H1 (cell line): ENCODE measurements at regions of chr5 and their contacts with region 1.

Region 1: DNA sequence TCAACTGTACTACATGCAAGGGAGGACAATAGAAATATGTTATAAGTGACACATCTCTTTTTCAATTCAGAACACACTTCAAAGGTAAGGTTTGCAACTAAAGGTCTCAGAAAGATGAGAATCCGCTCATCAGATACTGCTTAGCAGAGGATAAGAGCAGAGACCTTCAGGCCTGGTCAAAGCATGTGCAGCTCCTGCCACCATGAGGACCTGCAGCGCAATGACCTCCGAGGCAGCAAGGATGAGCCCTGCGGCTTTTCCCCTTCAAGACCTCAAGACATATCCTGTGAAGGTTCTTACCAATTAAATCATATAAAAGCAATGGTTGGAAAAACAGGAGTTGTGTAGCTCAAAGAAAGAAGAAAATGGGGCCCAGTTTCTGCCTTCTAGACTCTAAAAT is 135.8 kb downstream of the TRIM36 start:
- DNase-seq: peak; percentile 39 to 56
- H3K4me3 ChIP-seq: no peak overlapping the region
- H3K27ac ChIP-seq: no peak overlapping the region
- H3K4me1 ChIP-seq: no peaks in the 10 kb centered on the region; a peak in 1 of 7 replicates
- H3K27me3 ChIP-seq: no peaks in the 10 kb centered on the region
- CTCF ChIP-seq: peak; percentile 73 to 83 (median 80)
- EP300 ChIP-seq: no peak
- POLR2A ChIP-seq: no peak
- RAD21 ChIP-seq: peak; percentile 94 to 95

Region 2: GRCh38 chr5:114658194-114658593 is 375.7 kb before region 1 on chr5:
- CTCF ChIA-PET with region 1: no interaction called
- POLR2A ChIA-PET with region 1: no interaction called
- DNase-seq: no peak
- H3K4me3 ChIP-seq: no peak overlapping the region
- H3K27ac ChIP-seq: no peak overlapping the region
- H3K4me1 ChIP-seq: peaks cover 0 to 3% (median 0%) of the 10 kb centered on the region in 4 experiments; a peak in 1 of 7 replicates
- H3K27me3 ChIP-seq: no peaks in the 10 kb centered on the region
- CTCF ChIP-seq: no peak
- EP300 ChIP-seq: no peak
- POLR2A ChIP-seq: no peak
- RAD21 ChIP-seq: no peak

Region 3: DNA sequence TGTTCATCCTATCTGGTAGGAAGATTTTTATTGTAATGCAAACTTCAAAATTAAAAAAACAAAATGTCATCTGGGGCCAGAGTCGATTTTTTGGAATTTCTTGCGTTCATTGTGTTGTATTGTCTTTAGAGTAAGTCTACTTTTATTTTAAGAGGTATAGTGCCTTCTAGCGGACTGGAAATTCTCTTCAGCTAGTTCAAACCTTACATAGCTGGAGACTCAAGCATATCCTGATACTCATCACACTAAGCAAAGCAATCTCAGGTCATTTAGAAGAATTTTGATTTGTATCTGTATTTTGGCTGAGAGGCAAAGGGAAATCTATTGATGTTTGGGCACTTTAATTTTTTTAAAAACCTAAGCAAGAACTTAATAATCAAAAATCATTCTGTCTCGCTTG is 230.5 kb before region 1 on chr5:
- CTCF ChIA-PET with region 1: interaction called, 15 read pairs
- POLR2A ChIA-PET with region 1: no interaction called
- DNase-seq: no peak
- H3K4me3 ChIP-seq: no peak overlapping the region
- H3K27ac ChIP-seq: no peak overlapping the region
- H3K4me1 ChIP-seq: no peaks in the 10 kb centered on the region
- H3K27me3 ChIP-seq: no peaks in the 10 kb centered on the region
- CTCF ChIP-seq: no peak; a peak in 1 of 4 replicates
- EP300 ChIP-seq: no peak
- POLR2A ChIP-seq: no peak
- RAD21 ChIP-seq: peak; percentile 18 to 27; a peak in 3 of 4 replicates

Region 4: GRCh38 chr5:114898602-114899001 is 135.3 kb before region 1 on chr5:
- CTCF ChIA-PET with region 1: interaction called, 17 read pairs
- POLR2A ChIA-PET with region 1: no interaction called
- DNase-seq: no peak
- H3K4me3 ChIP-seq: no peak overlapping the region
- H3K27ac ChIP-seq: no peak overlapping the region
- H3K4me1 ChIP-seq: no peaks in the 10 kb centered on the region
- H3K27me3 ChIP-seq: no peaks in the 10 kb centered on the region
- CTCF ChIP-seq: peak in 2 of 3 experiments; percentile 47 to 51; a peak in 3 of 4 replicates
- EP300 ChIP-seq: no peak
- POLR2A ChIP-seq: no peak
- RAD21 ChIP-seq: peak; percentile 82 to 83

Region 5: GRCh38 chr5:115160975-115161475 is 127.2 kb after region 1 on chr5:
- CTCF ChIA-PET with region 1: no interaction called
- POLR2A ChIA-PET with region 1: no interaction called
- DNase-seq: no peak
- H3K4me3 ChIP-seq: no peak overlapping the region
- H3K27ac ChIP-seq: no peak overlapping the region
- H3K4me1 ChIP-seq: no peaks in the 10 kb centered on the region
- H3K27me3 ChIP-seq: no peaks in the 10 kb centered on the region
- CTCF ChIP-seq: no peak
- EP300 ChIP-seq: no peak
- POLR2A ChIP-seq: no peak
- RAD21 ChIP-seq: no peak